ENCODE measurements at regions of chr16 and their contacts with region 1.

Region 1: GRCh38 chr16:2142942-2143877 is 5.2 kb upstream of the RAB26 start:
- DNase-seq: no peak
- H3K4me3 Mint-ChIP-seq: no peak overlapping the region
- H3K27ac Mint-ChIP-seq: no peak overlapping the region
- H3K4me1 Mint-ChIP-seq: no peaks in the 10 kb centered on the region
- H3K27me3 Mint-ChIP-seq: no peaks in the 10 kb centered on the region
- CTCF ChIP-seq: no peak

Region 2: DNA sequence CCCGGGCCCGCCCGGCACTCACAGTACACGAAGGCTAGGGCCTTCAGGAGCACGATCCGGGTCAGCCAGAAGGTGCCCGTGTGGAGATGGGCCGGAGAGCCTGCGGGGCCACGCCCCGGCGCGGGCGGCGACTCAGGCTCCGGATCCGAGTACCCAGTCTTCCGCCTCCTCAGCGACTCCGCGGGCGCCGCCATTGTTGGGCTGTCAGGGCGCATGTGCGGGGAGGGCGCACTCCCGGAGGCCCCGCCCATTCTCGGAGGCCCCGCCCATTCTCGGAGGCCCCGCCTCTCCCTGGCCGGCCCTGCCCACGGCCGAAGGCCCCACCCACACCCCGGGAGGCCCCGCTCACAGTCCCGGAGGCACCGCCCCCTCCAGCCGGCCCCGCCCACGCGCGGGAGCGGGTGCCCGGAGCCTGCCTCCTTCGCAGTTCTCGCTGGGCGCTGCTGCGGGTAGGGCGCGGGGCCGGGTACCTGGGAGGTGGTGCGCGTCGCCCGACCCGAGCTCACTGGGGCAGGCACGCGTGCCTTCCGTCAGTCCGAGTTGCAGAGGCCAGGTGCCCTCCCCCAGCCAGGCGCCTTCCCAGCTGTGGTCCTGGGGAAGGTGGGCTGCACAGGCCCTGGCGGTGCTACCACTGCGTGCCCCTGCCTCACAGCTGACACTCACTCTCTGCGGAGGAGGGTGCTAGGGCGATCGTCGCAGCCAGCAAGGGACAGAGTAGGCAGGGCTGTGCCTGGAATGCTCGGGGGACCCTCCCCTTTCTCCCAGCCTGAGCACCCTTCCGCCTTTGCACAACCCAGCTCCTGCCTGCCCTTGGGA is 1172.2 kb before region 1 on chr16 and contains the start of gene LMF1:
- CTCF ChIA-PET with region 1: no interaction called
- intact Hi-C with region 1: no loop called
- DNase-seq: peak; percentile 98
- H3K4me3 Mint-ChIP-seq: peak within 1 kb of the TSS; percentile 69
- H3K27ac Mint-ChIP-seq: peak within 1 kb of the TSS; percentile 32
- H3K4me1 Mint-ChIP-seq: peaks cover 41% of the 10 kb centered on the region
- H3K27me3 Mint-ChIP-seq: no peaks in the 10 kb centered on the region
- CTCF ChIP-seq: no peak
- total RNA-seq, gene LMF1: 31.9 and 34.6 TPM in 2 replicates

Region 3: GRCh38 chr16:2003827-2004641 is 139.2 kb before region 1 on chr16:
- CTCF ChIA-PET with region 1: interaction called, 11 read pairs
- intact Hi-C with region 1: no loop called
- DNase-seq: peak; percentile 97
- H3K4me3 Mint-ChIP-seq: peak overlapping the region; percentile 17
- H3K27ac Mint-ChIP-seq: no peak overlapping the region
- H3K4me1 Mint-ChIP-seq: peaks cover 38% of the 10 kb centered on the region
- H3K27me3 Mint-ChIP-seq: no peaks in the 10 kb centered on the region
- CTCF ChIP-seq: peak; percentile 97

Region 4: GRCh38 chr16:2023098-2023925 is 119.9 kb before region 1 on chr16:
- CTCF ChIA-PET with region 1: interaction called, 29 read pairs
- intact Hi-C with region 1: loop called (anchors 2 kb)
- DNase-seq: peak; percentile 97
- H3K4me3 Mint-ChIP-seq: peak overlapping the region; percentile 73
- H3K27ac Mint-ChIP-seq: no peak overlapping the region
- H3K4me1 Mint-ChIP-seq: peaks cover 41% of the 10 kb centered on the region
- H3K27me3 Mint-ChIP-seq: peaks cover 56% of the 10 kb centered on the region
- CTCF ChIP-seq: peak; percentile 98